Posterior vena cava (tissue), 2 donors: ENCODE measurements at regions of chr3 and their contacts with region 1.

Region 1: GRCh38 chr3:32867954-32868353 is 50.2 kb downstream of the TRIM71 start:
- DNase-seq: no peak

Region 2: DNA sequence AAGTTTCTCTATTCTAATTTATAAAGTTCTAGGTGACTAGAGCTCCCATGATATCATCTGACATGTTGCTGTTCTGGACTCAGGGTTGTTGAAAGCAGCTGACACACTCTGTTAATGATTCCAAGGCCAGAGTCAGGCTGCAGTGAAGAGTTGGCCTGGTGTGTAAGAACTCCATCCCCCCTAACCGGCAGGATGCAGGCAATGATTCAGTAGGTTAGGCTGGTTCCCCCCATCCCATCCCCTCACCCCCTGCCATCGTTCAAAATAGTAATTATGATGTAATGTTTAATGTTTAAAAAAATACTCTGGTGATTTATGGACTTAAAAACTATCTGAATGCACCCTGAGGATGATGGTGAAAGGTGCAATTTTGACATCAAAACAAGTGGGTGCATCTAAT is 54.8 kb before region 1 on chr3:
- intact Hi-C with region 1: loop called in 1 of 2 experiments (anchors 2 kb)
- DNase-seq: no peak